ENCODE measurements at regions of chr2 and their contacts with region 1.

Region 1: GRCh38 chr2:207601774-207602173 is 23.4 kb downstream of the METTL21A start:
- DNase-seq: no peak
- H3K4me3 Mint-ChIP-seq: no peak overlapping the region
- H3K27ac Mint-ChIP-seq: peak overlapping the region; percentile 57
- H3K4me1 Mint-ChIP-seq: peaks cover 14% of the 10 kb centered on the region
- H3K27me3 Mint-ChIP-seq: no peaks in the 10 kb centered on the region

Region 2: GRCh38 chr2:207587305-207587704 is 14.5 kb before region 1 on chr2:
- CTCF ChIA-PET with region 1: no interaction called
- intact Hi-C with region 1: loop called (anchors 2 kb)
- DNase-seq: no peak
- H3K4me3 Mint-ChIP-seq: no peak overlapping the region
- H3K27ac Mint-ChIP-seq: peak overlapping the region; percentile 47
- H3K4me1 Mint-ChIP-seq: peaks cover 9% of the 10 kb centered on the region
- H3K27me3 Mint-ChIP-seq: no peaks in the 10 kb centered on the region

Measured in activated naive CD4-positive, alpha-beta T cell treated with anti-CD3 and anti-CD28 coated beads for 36 hours (primary cell).